ENCODE measurements at regions of chr5 and their contacts with region 1.

Region 1: GRCh38 chr5:188488-189481 is 2.5 kb upstream of the LRRC14B start:
- DNase-seq: peak; percentile 95
- H3K4me3 Mint-ChIP-seq: no peak overlapping the region
- H3K27ac Mint-ChIP-seq: no peak overlapping the region
- H3K4me1 Mint-ChIP-seq: peaks cover 11% of the 10 kb centered on the region
- H3K27me3 Mint-ChIP-seq: peaks cover 4% of the 10 kb centered on the region

Region 2: DNA sequence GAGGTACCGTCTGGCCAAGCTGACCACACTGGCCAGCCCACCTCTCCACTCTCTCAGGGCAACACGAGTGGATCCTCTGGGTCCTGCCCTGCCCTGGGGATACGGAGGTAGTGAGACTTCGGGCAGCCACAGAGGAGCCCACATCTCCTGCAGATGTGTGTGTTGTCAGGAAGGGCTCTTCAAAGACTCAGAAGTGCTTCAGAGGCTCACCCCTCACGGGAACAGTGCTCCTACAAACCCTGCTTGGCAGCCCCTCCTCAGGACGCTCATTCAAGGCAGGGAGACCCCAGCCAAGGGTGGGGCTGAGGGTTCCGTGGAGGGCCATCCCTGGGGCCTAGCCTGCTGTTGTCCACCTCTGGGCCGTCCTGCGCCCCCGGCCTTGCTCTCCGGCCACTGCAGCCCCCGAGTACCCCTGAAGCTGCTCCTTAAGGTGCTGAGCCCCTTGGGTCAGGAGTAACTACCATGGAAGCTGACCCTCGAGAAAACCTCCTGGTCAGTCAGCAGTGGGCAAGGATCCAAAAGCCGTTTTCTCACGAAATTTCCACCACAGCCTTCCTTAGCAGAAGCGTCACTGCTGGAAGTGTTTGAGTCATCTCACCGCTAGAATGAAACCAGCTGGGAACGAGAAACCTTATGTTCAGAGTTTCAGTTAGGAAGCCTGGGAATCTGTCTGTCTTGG is 20.7 kb before region 1 on chr5:
- CTCF ChIA-PET with region 1: no interaction called
- intact Hi-C with region 1: no loop called
- DNase-seq: no peak
- H3K4me3 Mint-ChIP-seq: no peak overlapping the region
- H3K27ac Mint-ChIP-seq: no peak overlapping the region
- H3K4me1 Mint-ChIP-seq: no peaks in the 10 kb centered on the region
- H3K27me3 Mint-ChIP-seq: no peaks in the 10 kb centered on the region

Region 3: GRCh38 chr5:217860-218456 is 29.2 kb after region 1 on chr5 and contains the starts of genes CCDC127 and SDHA:
- CTCF ChIA-PET with region 1: interaction called, 13 read pairs
- intact Hi-C with region 1: loop called (anchors 1 kb)
- DNase-seq: peak; percentile 94
- H3K4me3 Mint-ChIP-seq: peak within 1 kb of the TSS; percentile 92
- H3K27ac Mint-ChIP-seq: peak within 1 kb of the TSS; percentile 86
- H3K4me1 Mint-ChIP-seq: peaks cover 60% of the 10 kb centered on the region
- H3K27me3 Mint-ChIP-seq: no peaks in the 10 kb centered on the region
- total RNA-seq, gene CCDC127: 3.6 to 4.0 TPM
- total RNA-seq, gene SDHA: 133 to 136 TPM

Region 4: GRCh38 chr5:270340-270739 is 81.6 kb after region 1 on chr5:
- CTCF ChIA-PET with region 1: no interaction called
- intact Hi-C with region 1: loop called (anchors 1 kb)
- DNase-seq: no peak
- H3K4me3 Mint-ChIP-seq: peak overlapping the region; percentile 88
- H3K27ac Mint-ChIP-seq: peak overlapping the region; percentile 69
- H3K4me1 Mint-ChIP-seq: peaks cover 38% of the 10 kb centered on the region
- H3K27me3 Mint-ChIP-seq: no peaks in the 10 kb centered on the region

Region 5: DNA sequence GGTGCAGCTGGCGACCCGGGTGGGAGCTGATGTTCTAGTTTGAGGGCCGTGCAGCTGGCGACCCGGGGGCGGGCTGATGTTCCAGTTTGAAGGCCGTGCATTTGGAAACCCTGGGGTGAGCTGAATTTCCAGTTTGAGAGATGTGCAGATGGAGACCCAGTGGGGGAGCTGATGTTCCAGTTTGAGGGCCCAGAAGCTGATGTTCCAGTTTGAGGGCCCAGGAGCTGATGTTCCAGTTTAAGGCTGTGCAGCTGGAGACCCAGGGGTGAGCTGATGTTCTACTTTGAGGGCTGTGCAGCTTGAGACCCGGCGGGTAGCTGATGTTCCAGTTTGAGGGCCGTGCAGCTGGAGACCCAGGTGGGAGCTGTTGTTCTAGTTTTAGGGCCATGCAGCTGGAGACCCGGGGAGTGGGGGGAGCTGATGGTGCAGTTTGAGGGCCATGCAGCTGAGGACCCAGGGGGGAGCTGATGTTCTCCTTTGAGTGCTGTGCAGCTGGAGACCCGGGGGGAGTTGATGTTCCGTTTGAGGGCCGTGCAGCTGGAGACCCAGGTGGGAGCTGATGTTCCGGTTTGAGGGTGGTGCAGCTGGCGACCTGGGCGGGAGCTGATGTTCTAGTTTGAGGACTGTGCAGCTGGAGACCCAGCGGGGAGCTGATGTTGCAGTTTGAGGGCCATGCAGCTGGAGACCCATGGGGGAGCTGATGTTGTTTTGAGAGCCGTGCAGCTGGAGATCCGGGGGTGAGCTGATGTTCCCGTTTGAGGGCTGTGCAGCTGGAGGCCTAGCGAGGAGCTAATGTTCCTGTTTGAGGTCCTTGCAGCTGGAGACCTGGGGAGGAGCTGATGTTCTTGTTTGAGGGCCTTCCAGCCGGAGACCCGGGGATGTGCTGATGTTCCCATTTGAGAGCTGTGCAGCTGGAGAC is 97.1 kb after region 1 on chr5:
- CTCF ChIA-PET with region 1: interaction called, 13 read pairs
- intact Hi-C with region 1: no loop called
- DNase-seq: no peak
- H3K4me3 Mint-ChIP-seq: no peak overlapping the region
- H3K27ac Mint-ChIP-seq: no peak overlapping the region
- H3K4me1 Mint-ChIP-seq: peaks cover 44% of the 10 kb centered on the region
- H3K27me3 Mint-ChIP-seq: no peaks in the 10 kb centered on the region

Region 6: GRCh38 chr5:350355-350754 is 161.6 kb after region 1 on chr5:
- CTCF ChIA-PET with region 1: no interaction called
- intact Hi-C with region 1: no loop called
- DNase-seq: no peak
- H3K4me3 Mint-ChIP-seq: no peak overlapping the region
- H3K27ac Mint-ChIP-seq: no peak overlapping the region
- H3K4me1 Mint-ChIP-seq: peaks cover 10% of the 10 kb centered on the region
- H3K27me3 Mint-ChIP-seq: peaks cover 16% of the 10 kb centered on the region

Region 7: DNA sequence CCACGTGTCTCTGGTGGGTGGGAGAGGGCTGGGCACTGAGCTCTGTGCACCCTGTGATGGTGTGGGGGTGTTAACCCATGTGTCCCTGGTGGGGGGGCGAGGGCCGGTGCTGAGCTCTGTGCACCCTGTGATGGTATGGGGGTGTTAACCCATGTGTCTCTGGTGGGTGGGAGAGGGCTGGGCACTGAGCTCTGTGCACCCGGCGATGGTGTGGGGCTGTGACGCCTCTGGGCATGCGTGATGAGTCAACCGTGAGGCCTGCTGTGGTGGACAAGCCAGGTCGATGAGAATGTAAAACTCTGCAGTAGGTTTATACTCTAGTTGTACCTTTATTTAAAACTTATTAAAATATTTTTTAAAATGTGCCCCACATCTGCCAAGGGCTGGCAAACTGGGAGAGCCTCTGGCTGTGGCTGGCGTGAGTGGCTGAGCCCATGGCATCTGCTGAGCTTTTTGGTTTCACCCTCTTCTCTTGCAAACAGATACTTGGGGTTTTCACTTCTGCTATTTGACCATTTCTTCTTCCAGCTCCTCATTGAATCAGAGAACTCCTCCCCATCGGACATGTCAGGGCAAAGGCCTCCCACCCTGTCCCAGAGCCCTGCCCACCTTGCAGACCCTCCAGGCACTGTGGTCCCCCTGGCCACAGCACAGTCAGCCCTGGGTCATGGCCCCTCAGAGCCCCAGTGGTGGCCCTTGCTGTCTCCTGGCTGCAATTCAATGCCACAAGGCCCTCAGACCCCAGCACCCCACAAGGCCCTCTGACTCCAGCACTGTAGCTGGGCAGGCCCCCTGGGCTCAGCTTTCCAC is 235.7 kb after region 1 on chr5:
- CTCF ChIA-PET with region 1: interaction called, 4 read pairs
- intact Hi-C with region 1: loop called (anchors 1 kb)
- DNase-seq: no peak
- H3K4me3 Mint-ChIP-seq: no peak overlapping the region
- H3K27ac Mint-ChIP-seq: no peak overlapping the region
- H3K4me1 Mint-ChIP-seq: no peaks in the 10 kb centered on the region
- H3K27me3 Mint-ChIP-seq: no peaks in the 10 kb centered on the region

Region 8: DNA sequence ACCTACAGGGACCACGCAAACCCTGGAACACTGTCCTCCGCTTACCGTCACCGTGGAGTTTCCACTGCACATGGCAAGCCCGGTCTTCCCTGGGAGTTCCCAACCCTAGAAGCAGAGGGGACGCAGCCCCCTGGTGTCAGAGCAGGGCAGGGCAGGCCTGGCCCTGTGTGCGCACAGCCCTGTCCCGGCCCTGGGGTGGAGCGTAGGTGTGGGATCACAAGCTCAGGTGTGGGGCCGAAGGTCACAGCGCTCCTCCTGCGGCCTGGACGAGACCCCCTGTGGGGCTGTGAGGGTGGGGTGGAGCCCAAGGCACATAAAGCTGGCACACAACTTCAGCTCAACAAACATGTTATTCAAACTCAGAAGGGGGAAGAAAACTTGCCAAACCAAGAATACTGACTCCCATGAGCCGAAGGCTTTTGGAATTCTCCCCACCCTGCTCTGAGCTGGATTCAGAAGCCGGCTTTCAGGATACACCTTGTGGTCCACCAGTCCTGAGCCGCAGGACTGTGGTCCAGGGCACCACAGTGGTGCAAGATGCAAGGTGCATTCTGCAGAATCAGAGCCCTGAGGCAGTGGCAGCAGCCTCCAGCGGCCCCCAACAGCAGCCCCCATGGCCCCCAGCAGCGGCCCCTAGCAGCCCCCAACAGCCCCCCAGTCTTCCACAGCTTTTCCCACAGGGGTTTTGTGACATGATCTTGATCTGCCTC is 242.4 kb after region 1 on chr5:
- CTCF ChIA-PET with region 1: interaction called, 4 read pairs
- intact Hi-C with region 1: loop called (anchors 1 kb)
- DNase-seq: peak; percentile 60
- H3K4me3 Mint-ChIP-seq: no peak overlapping the region
- H3K27ac Mint-ChIP-seq: no peak overlapping the region
- H3K4me1 Mint-ChIP-seq: no peaks in the 10 kb centered on the region
- H3K27me3 Mint-ChIP-seq: no peaks in the 10 kb centered on the region

Region 9: DNA sequence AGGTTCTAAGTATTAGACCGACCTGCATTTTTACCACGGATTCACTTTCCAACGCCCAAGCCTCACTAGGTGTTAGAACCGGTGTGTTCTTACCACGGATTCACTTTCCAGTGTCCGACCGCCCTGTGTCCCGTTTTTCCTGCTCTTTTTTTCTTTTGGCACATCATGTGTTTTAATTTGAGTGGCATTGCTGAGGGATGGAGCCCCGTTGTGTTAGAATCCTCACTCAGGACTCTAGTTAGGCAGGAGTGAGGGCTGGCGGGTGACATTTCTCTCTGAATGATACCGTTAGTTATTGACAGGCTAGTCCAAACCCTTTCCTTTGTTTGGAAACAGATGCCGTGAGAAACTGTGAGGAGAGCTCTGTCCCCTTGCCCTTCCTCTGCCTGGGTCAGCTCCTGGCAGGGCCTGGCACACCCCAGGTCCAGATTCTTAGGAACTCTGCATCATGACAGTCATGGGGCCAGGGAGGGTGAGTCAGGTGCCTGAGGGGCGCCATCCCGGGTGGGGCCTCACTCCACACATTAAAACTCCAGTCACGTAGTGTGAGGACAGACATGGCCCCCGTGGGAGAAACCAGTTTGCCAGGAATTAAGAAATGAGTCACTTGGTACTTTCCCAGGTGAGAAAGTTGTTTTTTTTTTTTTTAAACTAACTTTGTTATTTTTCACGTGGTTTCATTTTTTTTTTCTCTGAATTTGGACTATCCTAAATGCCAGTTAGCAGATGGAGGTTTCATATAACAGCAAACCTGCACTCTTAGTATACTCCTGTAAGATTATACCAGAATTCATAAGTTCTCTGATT is 270.0 kb after region 1 on chr5:
- CTCF ChIA-PET with region 1: no interaction called
- intact Hi-C with region 1: no loop called
- DNase-seq: peak; percentile 87
- H3K4me3 Mint-ChIP-seq: peak overlapping the region; percentile 21
- H3K27ac Mint-ChIP-seq: peak overlapping the region; percentile 94
- H3K4me1 Mint-ChIP-seq: peaks cover 57% of the 10 kb centered on the region
- H3K27me3 Mint-ChIP-seq: no peaks in the 10 kb centered on the region

Measured in activated naive CD4-positive, alpha-beta T cell treated with anti-CD3 and anti-CD28 coated beads for 36 hours (primary cell).